SK-N-SH (cell line): ENCODE measurements at regions of chr3 and their contacts with region 1.

Region 1: GRCh38 chr3:119891944-119892721 is 110.2 kb downstream of the NR1I2 start:
- DNase-seq: peak; percentile 23
- H3K4me3 ChIP-seq: no peak overlapping the region; a peak in 1 of 4 replicates
- H3K27ac ChIP-seq: no peak overlapping the region
- H3K4me1 ChIP-seq: no peaks in the 10 kb centered on the region; a peak in 1 of 4 replicates
- H3K27me3 ChIP-seq: no peaks in the 10 kb centered on the region
- CTCF ChIP-seq: peak; percentile 80
- EP300 ChIP-seq: no peak
- RAD21 ChIP-seq: peak; percentile 97

Region 2: DNA sequence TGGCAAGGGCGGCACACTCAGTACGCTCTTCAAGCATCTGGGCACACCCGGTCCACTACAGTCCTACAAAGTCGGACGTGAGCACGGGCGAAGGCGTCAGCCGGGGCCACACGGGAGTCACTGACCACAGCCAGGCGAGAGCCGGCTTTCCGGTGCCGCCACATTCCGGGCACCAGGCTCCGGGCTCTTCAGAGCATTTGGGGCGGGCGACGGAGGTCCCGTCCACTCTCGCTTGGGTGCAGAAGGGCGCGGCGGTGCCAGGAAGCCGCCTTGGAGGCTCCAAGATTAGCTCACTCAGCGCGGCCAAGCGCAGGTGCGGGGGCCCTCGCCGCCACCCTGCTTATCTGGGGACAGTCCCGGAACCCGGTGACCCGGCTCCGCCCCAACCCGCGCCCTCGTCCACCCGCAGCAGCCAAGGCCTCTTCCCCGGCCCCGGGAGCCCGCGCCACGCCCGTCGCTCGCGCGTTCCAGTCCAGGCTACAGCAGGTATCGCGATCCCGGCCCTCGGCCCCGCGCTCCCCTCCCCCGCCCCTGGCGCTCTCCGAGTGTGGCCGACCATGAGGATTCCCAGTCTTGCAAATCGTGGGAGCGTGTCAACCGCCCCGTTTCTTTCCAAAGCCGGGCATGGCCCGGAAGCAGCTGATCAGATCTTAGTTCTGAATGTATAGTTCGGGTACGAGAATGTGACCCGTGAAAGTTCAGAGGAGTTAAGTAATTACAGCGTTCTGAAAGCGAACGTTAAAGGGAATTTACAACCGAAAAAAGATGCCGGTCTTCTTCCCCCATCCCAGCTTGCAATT is 312.6 kb before region 1 on chr3 and contains the start of gene ADPRH:
- CTCF ChIA-PET with region 1: no interaction called
- POLR2A ChIA-PET with region 1: no interaction called
- DNase-seq: peak; percentile 77
- H3K4me3 ChIP-seq: peak within 1 kb of the TSS in 1 of 2 experiments; percentile 37; a peak in 2 of 4 replicates
- H3K27ac ChIP-seq: no peak within 1 kb of the TSS; a peak in 1 of 4 replicates
- H3K4me1 ChIP-seq: no peaks in the 10 kb centered on the region; a peak in 1 of 4 replicates
- H3K27me3 ChIP-seq: no peaks in the 10 kb centered on the region
- CTCF ChIP-seq: no peak
- EP300 ChIP-seq: no peak
- RAD21 ChIP-seq: no peak
- polyA plus RNA-seq, gene ADPRH: 0.08 TPM in 1 of 2 replicates, not detected in the other

Region 3: GRCh38 chr3:119676771-119677640 is 215.1 kb before region 1 on chr3 and contains the start of gene COX17:
- CTCF ChIA-PET with region 1: no interaction called
- POLR2A ChIA-PET with region 1: no interaction called
- DNase-seq: peak; percentile 62
- H3K4me3 ChIP-seq: peak within 1 kb of the TSS; percentile 50 to 52
- H3K27ac ChIP-seq: peak within 1 kb of the TSS; percentile 29 to 81
- H3K4me1 ChIP-seq: peaks cover 0 to 27% of the 10 kb centered on the region in 2 experiments; a peak in 2 of 4 replicates
- H3K27me3 ChIP-seq: no peaks in the 10 kb centered on the region
- CTCF ChIP-seq: no peak
- EP300 ChIP-seq: no peak
- RAD21 ChIP-seq: no peak; the same call in 1 of the 2 replicates
- polyA plus RNA-seq, gene COX17: 15.1 and 21.5 TPM in 2 replicates

Region 4: DNA sequence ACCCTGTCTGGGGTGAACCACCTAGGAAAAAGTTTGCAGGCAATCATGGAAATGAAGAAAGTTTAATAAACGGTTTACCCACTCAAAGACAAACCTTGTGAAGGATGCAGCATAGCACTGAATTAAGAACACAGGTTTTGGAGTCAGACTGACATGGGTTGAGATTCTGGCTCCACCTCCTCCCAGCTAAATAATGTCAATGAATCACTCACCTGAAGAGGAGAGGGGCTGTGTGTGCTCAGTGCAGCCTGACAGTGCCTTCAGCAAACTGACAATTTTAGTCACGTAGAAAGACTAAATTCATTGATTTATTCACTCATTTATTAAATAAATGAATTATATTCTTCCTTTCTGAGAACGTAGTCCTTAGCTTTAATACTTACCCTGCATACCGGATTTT is 91.3 kb before region 1 on chr3:
- CTCF ChIA-PET with region 1: no interaction called
- POLR2A ChIA-PET with region 1: no interaction called
- DNase-seq: no peak
- H3K4me3 ChIP-seq: no peak overlapping the region
- H3K27ac ChIP-seq: no peak overlapping the region
- H3K4me1 ChIP-seq: no peaks in the 10 kb centered on the region
- H3K27me3 ChIP-seq: no peaks in the 10 kb centered on the region; the same call in 1 of the 2 replicates
- CTCF ChIP-seq: no peak
- EP300 ChIP-seq: no peak
- RAD21 ChIP-seq: no peak

Region 5: GRCh38 chr3:119870512-119870911 is 21.6 kb before region 1 on chr3:
- CTCF ChIA-PET with region 1: interaction called, 19 read pairs
- POLR2A ChIA-PET with region 1: no interaction called
- DNase-seq: no peak
- H3K4me3 ChIP-seq: no peak overlapping the region
- H3K27ac ChIP-seq: no peak overlapping the region
- H3K4me1 ChIP-seq: no peaks in the 10 kb centered on the region
- H3K27me3 ChIP-seq: no peaks in the 10 kb centered on the region
- CTCF ChIP-seq: no peak
- EP300 ChIP-seq: no peak
- RAD21 ChIP-seq: no peak

Region 6: DNA sequence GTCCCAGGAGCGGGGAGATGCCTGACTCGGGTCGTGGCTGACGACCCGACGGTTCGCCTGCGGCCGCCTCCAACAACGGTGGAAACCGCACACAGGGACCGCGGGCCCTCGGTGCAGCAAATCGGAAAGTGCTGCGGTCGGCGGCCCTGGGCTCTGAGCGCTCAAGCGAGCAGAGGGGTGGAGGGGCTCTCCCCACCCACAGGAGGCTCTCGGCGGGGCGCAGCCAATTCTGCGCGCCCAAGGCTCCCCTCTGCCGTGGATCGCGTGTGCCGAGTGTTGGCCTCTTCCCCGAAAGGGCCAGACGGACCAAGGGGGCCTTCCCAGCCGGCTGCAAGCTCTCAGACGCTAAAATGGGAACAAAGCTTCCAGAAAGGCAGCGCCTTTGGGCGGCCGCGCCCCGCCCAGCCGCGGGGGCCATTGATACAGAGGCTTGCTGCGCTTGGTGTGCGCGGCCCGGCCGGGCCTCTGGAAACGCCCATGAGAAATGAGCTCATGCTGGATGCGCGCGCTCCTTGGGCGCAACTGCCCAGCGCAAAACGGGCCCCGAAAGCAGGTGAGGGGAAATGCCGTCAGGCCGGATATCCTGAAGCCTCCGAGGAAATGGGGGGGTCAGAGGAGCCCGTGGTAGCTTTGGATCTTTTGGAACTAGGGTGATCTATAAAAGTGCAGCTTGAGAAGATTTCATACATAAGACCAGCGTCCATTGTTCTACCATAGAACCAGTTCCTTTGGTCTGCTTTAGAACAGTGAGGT is 203.3 kb after region 1 on chr3:
- CTCF ChIA-PET with region 1: interaction called, 13 read pairs
- POLR2A ChIA-PET with region 1: interaction called, 9 read pairs
- DNase-seq: peak; percentile 77
- H3K4me3 ChIP-seq: peak overlapping the region; percentile 73 to 95
- H3K27ac ChIP-seq: peak overlapping the region; percentile 99 to 100
- H3K4me1 ChIP-seq: peaks cover 7 to 13% of the 10 kb centered on the region in 2 experiments; a peak in 3 of 4 replicates
- H3K27me3 ChIP-seq: no peaks in the 10 kb centered on the region
- CTCF ChIP-seq: no peak
- EP300 ChIP-seq: peak in 1 of 2 experiments; percentile 24; a peak in 1 of 4 replicates
- RAD21 ChIP-seq: no peak; the same call in 1 of the 2 replicates

Region 7: DNA sequence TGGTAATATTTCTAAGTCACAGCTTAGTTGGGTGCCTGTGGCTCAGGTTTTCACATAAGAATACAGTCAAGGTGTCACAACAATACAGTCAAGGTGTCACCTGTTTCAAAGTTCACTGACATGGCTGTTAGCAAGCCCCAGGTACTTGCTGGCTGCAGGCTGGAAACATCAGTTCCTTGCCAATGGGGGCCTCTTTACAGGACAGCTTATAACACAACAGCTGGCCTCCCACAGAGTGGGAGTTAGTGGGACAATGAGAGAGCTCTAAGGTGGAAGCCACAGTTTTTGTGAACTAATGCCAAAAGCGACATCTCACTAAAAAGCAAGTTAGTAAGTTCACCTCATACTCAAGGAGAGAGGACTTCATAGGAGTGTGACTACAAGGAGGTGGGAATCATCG is 347.5 kb after region 1 on chr3:
- CTCF ChIA-PET with region 1: interaction called, 26 read pairs
- POLR2A ChIA-PET with region 1: no interaction called
- DNase-seq: no peak
- H3K4me3 ChIP-seq: no peak overlapping the region
- H3K27ac ChIP-seq: no peak overlapping the region
- H3K4me1 ChIP-seq: peaks cover 0 to under 1% of the 10 kb centered on the region in 2 experiments; a peak in 1 of 4 replicates
- H3K27me3 ChIP-seq: no peaks in the 10 kb centered on the region
- CTCF ChIP-seq: no peak
- EP300 ChIP-seq: no peak
- RAD21 ChIP-seq: no peak

Region 8: GRCh38 chr3:120245386-120245785 is 353.3 kb after region 1 on chr3:
- CTCF ChIA-PET with region 1: interaction called, 26 read pairs
- POLR2A ChIA-PET with region 1: no interaction called
- DNase-seq: no peak
- H3K4me3 ChIP-seq: no peak overlapping the region
- H3K27ac ChIP-seq: no peak overlapping the region
- H3K4me1 ChIP-seq: peaks cover 0 to 3% of the 10 kb centered on the region in 2 experiments; a peak in 1 of 4 replicates
- H3K27me3 ChIP-seq: no peaks in the 10 kb centered on the region
- CTCF ChIP-seq: no peak
- EP300 ChIP-seq: no peak
- RAD21 ChIP-seq: no peak